ENCODE measurements at regions of chr11 and their contacts with region 1.

Region 1: GRCh38 chr11:75022759-75023396 is 34.1 kb downstream of the NEU3 start:
- DNase-seq: peak; percentile 55 to 65
- H3K4me3 ChIP-seq: no peak overlapping the region
- H3K27ac ChIP-seq: no peak overlapping the region
- H3K4me1 ChIP-seq: no peaks in the 10 kb centered on the region
- H3K27me3 ChIP-seq: no peaks in the 10 kb centered on the region
- CTCF ChIP-seq: peak; percentile 73 to 85 (median 76)
- POLR2A ChIP-seq: no peak

Region 2: GRCh38 chr11:75248690-75249268 is 225.9 kb after region 1 on chr11:
- intact Hi-C with region 1: loop called (anchors 5 kb)
- DNase-seq: peak; percentile 92 to 93
- H3K4me3 ChIP-seq: no peak overlapping the region
- H3K27ac ChIP-seq: no peak overlapping the region
- H3K4me1 ChIP-seq: no peaks in the 10 kb centered on the region
- H3K27me3 ChIP-seq: no peaks in the 10 kb centered on the region
- CTCF ChIP-seq: peak; percentile 99 to 100 (median 100)
- POLR2A ChIP-seq: no peak

Measured in uterus (tissue), 4 donors.